Vagina (tissue), 2 donors: ENCODE measurements at regions of chr3 and their contacts with region 1.

Region 1: GRCh38 chr3:149273096-149273751 is 51.6 kb upstream of the CP start:
- DNase-seq: no peak
- H3K4me3 ChIP-seq: no peak overlapping the region
- H3K27ac ChIP-seq: no peak overlapping the region
- H3K4me1 ChIP-seq: no peaks in the 10 kb centered on the region
- H3K27me3 ChIP-seq: no peaks in the 10 kb centered on the region
- CTCF ChIP-seq: peak; percentile 68 to 95 (median 70)
- POLR2A ChIP-seq: no peak

Region 2: GRCh38 chr3:148955544-148956346 is 317.5 kb before region 1 on chr3:
- intact Hi-C with region 1: loop called (anchors 1 kb)
- DNase-seq: peak in 1 of 2 donors; percentile 93
- H3K4me3 ChIP-seq: no peak overlapping the region
- H3K27ac ChIP-seq: peak overlapping the region; percentile 85
- H3K4me1 ChIP-seq: peaks cover 9% of the 10 kb centered on the region
- H3K27me3 ChIP-seq: no peaks in the 10 kb centered on the region
- CTCF ChIP-seq: peak; percentile 39 to 49 (median 42)
- POLR2A ChIP-seq: no peak

Region 3: GRCh38 chr3:149120051-149120972 is 152.9 kb before region 1 on chr3:
- intact Hi-C with region 1: loop called (anchors 5 kb)
- DNase-seq: no peak
- H3K4me3 ChIP-seq: no peak overlapping the region
- H3K27ac ChIP-seq: no peak overlapping the region
- H3K4me1 ChIP-seq: no peaks in the 10 kb centered on the region
- H3K27me3 ChIP-seq: no peaks in the 10 kb centered on the region
- CTCF ChIP-seq: peak in 2 of 3 experiments; percentile 63 to 77
- POLR2A ChIP-seq: no peak

Region 4: DNA sequence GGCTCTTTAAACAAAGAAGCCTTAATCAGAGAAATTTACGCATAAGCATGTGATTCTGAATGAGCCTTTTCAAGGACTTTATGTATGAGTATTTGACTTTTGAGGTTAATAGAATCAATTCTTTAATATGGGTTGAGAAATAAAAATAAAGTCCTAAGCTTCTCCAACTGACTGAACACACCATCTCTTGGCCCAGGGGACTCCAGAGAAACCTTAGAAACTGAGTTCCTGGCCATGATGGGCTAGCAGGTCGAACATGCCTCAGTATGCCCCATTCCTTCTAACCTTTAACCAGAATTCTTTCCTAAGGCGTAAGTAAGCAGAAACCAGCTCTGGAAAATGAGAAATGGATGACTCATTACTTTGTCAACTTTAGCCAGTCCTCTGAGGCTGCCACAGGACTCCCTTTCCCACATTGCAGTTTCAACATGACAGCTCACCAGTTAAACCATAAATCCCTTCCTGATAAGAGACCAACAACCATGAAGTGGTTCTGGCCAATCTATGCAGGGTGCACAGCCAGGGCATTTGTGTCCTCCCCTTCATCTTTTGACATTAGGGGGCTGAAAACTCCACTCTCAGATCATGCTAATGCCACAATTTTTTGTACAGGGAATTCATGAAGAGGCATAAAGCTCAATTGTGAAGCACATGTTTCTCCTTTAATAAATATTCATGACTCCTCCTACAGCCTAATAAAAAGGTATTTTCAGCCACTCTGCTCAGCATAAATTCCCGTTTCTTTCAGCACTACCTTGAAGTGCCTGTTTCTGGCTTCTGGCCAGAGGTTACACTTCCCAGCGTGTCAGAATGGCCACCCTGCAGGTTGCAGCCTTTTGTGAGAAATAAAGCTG is 26.9 kb after region 1 on chr3:
- intact Hi-C with region 1: no loop called
- DNase-seq: no peak
- H3K4me3 ChIP-seq: no peak overlapping the region
- H3K27ac ChIP-seq: peak overlapping the region; percentile 36
- H3K4me1 ChIP-seq: peaks cover 16% of the 10 kb centered on the region
- H3K27me3 ChIP-seq: no peaks in the 10 kb centered on the region
- CTCF ChIP-seq: no peak
- POLR2A ChIP-seq: no peak